Vagina (tissue), 2 donors: ENCODE measurements at regions of chr4 and their contacts with region 1.

Region 1: DNA sequence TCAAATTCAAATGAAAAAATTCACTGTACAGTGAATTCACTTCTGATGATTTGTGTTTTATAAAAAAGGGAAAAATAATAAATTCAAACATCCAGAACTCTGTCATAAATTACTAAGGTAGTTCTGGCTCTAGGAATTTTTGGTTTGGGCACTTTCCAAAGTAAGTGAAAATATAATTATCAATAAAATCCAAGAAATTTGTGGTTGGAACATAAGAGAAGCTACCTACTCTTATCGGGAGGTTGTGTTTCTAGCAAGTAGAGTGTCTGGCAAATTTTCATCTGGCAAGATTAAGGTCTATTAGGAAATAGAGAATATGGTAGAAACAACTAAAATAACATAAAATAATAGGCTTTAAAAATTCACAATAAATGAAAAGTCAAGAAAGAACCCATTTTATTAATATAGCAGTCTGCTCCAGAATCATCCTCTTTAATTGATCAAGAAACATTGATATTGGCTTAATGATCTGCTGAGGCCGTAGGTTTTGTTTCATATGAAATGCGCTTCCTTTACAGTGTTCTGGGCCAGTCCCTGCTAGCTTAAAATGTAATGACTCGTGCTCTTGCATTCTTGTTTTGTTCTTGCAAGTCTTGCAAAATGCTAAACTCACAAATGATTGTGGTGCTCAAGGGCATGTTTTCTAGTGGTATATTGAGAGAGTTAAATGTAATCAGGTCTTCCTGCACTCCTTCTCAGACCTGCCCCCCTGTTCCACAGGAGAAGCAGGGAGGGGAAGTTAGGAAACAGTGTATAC is 331.4 kb downstream of the RAPGEF2 start:
- DNase-seq: no peak
- H3K4me3 ChIP-seq: no peak overlapping the region
- H3K27ac ChIP-seq: no peak overlapping the region
- H3K4me1 ChIP-seq: no peaks in the 10 kb centered on the region
- H3K27me3 ChIP-seq: no peaks in the 10 kb centered on the region
- CTCF ChIP-seq: no peak
- POLR2A ChIP-seq: no peak

Region 2: GRCh38 chr4:159142241-159142640 is 292.1 kb before region 1 on chr4:
- intact Hi-C with region 1: no loop called
- DNase-seq: no peak
- H3K4me3 ChIP-seq: no peak overlapping the region
- H3K27ac ChIP-seq: no peak overlapping the region
- H3K4me1 ChIP-seq: peaks cover 39% of the 10 kb centered on the region
- H3K27me3 ChIP-seq: no peaks in the 10 kb centered on the region
- CTCF ChIP-seq: no peak
- POLR2A ChIP-seq: no peak

Region 3: DNA sequence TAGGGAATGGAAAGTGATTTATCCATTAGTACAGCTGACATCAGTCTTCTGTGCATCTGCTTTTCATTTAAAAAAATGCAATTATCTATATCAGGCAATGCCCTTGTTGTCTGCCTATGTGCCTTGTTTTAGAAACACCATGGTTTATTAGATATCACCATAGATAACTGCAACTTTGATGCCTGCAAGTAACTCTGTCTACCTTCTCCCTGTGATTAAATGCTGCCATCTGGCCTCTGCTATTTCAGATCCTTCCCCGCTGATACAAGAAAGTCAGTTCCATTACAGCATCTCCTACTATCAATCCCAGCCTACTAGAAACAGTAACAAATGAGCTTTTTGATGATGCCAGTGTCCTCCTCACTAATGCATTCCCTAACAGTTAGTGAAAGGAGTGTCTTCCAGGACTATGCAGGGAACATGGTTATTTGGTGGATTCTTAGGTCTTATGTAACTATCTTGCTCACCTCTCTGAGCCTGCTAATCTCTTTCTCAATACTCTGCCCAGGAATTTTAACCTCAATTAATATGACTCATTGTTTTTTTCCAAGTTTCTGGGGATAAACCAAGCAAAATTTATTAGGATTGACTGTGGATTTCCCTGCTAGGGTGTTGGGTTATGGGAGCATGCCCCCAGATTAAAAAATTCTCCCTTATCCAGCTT is 113.5 kb after region 1 on chr4:
- intact Hi-C with region 1: no loop called
- DNase-seq: no peak
- H3K4me3 ChIP-seq: no peak overlapping the region
- H3K27ac ChIP-seq: no peak overlapping the region
- H3K4me1 ChIP-seq: no peaks in the 10 kb centered on the region
- H3K27me3 ChIP-seq: no peaks in the 10 kb centered on the region
- CTCF ChIP-seq: no peak
- POLR2A ChIP-seq: no peak

Region 4: DNA sequence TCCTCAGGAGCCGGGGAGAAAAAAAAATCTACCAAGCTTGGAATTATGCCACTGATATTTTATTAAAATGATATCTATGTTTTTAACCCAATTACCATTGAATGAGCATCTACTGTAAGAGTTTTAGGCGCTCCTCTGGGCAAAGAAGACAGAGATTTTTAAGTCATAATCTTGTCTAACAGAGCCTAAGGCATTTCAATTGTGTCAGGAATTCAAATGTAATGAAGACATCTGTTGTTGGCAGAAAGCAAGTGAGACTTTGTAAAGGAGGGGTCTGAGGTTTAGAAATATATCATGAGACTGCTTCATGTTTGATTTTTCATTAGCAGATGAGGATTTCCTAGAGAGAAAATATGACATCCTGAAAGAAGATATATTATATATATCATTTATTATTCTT is 1571.5 kb after region 1 on chr4:
- intact Hi-C with region 1: loop called (anchors 5 kb)
- DNase-seq: no peak
- H3K4me3 ChIP-seq: no peak overlapping the region
- H3K27ac ChIP-seq: no peak overlapping the region
- H3K4me1 ChIP-seq: no peaks in the 10 kb centered on the region
- H3K27me3 ChIP-seq: no peaks in the 10 kb centered on the region
- CTCF ChIP-seq: no peak
- POLR2A ChIP-seq: no peak